ENCODE measurements at regions of chr17 and their contacts with region 1.

Region 1: GRCh38 chr17:47978324-47978723 is 7.4 kb downstream of the CDK5RAP3 start:
- DNase-seq: no peak
- ATAC-seq: peak; percentile 85
- H3K4me3 ChIP-seq: no peak overlapping the region
- H3K27ac ChIP-seq: no peak overlapping the region
- H3K4me1 ChIP-seq: no peaks in the 10 kb centered on the region
- H3K27me3 ChIP-seq: no peaks in the 10 kb centered on the region
- CTCF ChIP-seq: no peak; the same call in 1 of the 2 replicates

Region 2: GRCh38 chr17:47995241-47995935 is 17.1 kb after region 1 on chr17:
- CTCF ChIA-PET with region 1: no interaction called
- POLR2A ChIA-PET with region 1: no interaction called
- in situ Hi-C with region 1: no loop called
- intact Hi-C with region 1: loop called (anchors 2 kb)
- DNase-seq: no peak
- ATAC-seq: no peak
- H3K4me3 ChIP-seq: no peak overlapping the region
- H3K27ac ChIP-seq: no peak overlapping the region
- H3K4me1 ChIP-seq: peaks cover 6% of the 10 kb centered on the region; the same call in 1 of the 2 replicates
- H3K27me3 ChIP-seq: no peaks in the 10 kb centered on the region
- CTCF ChIP-seq: no peak

Region 3: DNA sequence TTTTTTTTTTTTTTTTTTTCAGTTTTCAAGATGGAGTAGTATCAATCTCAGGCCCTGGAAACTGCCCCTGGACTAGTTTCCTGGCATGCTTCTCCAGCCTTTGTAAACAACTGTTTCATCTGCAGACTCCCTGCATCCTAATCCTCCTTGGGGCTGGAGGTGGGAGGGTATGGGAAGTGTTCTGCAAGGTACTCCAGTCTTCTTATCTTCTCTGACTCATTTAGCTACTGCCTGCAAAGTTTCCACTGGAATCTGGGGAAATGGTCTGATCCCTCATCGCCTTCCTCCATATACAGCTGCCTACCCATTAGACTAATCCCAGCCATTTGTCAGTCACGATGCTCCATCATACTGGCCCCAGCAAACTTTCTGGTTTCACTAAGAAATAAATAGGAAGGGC is 37.8 kb after region 1 on chr17:
- CTCF ChIA-PET with region 1: interaction called, 21 read pairs
- POLR2A ChIA-PET with region 1: no interaction called
- in situ Hi-C with region 1: no loop called
- intact Hi-C with region 1: loop called (anchors 1 kb)
- DNase-seq: no peak
- ATAC-seq: peak; percentile 47
- H3K4me3 ChIP-seq: no peak overlapping the region
- H3K27ac ChIP-seq: no peak overlapping the region
- H3K4me1 ChIP-seq: peaks cover 13% of the 10 kb centered on the region; the same call in 1 of the 2 replicates
- H3K27me3 ChIP-seq: no peaks in the 10 kb centered on the region
- CTCF ChIP-seq: no peak

Region 4: DNA sequence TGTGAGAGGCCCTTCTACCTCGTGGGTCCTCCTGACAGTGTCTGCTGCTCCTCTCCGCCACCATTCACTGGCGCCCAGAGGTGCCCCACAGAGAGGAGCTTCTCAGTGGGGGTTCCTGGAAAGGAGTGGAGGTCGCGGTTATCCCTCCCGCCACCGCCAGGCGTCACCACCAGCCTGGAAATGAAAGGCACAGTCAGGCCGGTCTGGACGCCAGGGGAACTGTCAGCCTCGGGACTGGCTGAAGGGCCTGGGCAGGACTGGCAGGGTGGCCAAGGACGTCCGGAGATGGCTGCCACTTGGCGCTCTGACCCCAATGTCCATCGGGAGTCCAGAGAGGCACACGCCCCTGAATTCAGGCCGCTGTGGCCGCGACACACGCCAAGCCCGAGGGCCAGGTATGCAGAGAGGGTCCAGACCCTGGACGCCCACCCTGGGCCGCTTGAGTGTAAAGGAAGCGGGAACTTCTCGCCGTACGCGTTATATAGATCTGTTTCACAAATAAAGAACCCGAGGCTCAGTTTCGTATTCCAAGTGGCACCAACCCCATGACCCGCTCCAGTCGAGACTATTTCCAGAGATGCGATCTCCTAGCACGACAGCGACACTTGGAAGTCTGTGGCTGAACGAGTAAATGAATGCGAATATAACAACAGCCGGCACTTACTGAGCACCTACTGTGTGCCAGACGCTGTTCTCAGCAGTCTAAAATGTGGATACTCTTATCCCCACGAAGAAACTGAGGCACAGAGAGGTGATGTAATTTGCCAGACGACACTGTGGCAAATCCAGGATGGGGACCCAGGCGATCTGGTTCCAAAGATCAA is 1589.8 kb after region 1 on chr17:
- CTCF ChIA-PET with region 1: no interaction called
- POLR2A ChIA-PET with region 1: no interaction called
- in situ Hi-C with region 1: no loop called
- intact Hi-C with region 1: no loop called
- DNase-seq: no peak
- ATAC-seq: peak; percentile 90
- H3K4me3 ChIP-seq: peak overlapping the region; percentile 53 to 80
- H3K27ac ChIP-seq: no peak overlapping the region
- H3K4me1 ChIP-seq: peaks cover 7% of the 10 kb centered on the region
- H3K27me3 ChIP-seq: peaks cover 3% of the 10 kb centered on the region
- CTCF ChIP-seq: peak; percentile 97